HepG2 (cell line): ENCODE measurements at regions of chr9 and their contacts with region 1.

Region 1: DNA sequence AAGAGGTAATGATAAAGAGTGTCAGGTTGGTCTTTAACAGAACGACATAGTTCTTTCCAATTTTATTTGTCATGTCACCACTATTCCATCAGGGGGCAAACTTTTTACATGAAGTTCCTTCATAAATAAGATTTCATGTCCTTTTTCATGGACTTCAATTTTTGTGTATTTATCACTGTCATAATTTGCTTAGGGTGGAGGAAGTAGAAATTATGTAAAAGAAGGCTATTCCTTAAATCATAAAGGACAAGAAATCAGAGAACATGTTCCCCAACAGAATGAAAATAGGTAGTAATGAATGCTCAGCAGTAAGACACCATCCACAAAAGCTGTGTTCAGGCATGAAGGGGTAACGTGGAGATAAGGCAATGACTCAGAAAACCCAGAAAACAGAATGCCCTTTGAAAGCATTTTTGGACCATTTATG is 72.7 kb downstream of the ZFAND5 start:
- DNase-seq: peak; percentile 30
- ATAC-seq: no peak
- H3K4me3 ChIP-seq: no peak overlapping the region
- H3K27ac ChIP-seq: no peak overlapping the region
- H3K4me1 ChIP-seq: peaks cover 12% of the 10 kb centered on the region
- H3K27me3 ChIP-seq: no peaks in the 10 kb centered on the region
- CTCF ChIP-seq: peak; percentile 52
- EP300 ChIP-seq: no peak
- POLR2A ChIP-seq: no peak
- RAD21 ChIP-seq: no peak

Region 2: GRCh38 chr9:72443855-72444254 is 151.6 kb after region 1 on chr9:
- CTCF ChIA-PET with region 1: no interaction called
- POLR2A ChIA-PET with region 1: no interaction called
- in situ Hi-C with region 1: no loop called
- intact Hi-C with region 1: loop called (anchors 5 kb)
- DNase-seq: no peak
- ATAC-seq: no peak
- H3K4me3 ChIP-seq: no peak overlapping the region
- H3K27ac ChIP-seq: no peak overlapping the region
- H3K4me1 ChIP-seq: peaks cover 6% of the 10 kb centered on the region; the same call in 1 of the 2 replicates
- H3K27me3 ChIP-seq: no peaks in the 10 kb centered on the region
- CTCF ChIP-seq: no peak
- EP300 ChIP-seq: no peak
- POLR2A ChIP-seq: no peak
- RAD21 ChIP-seq: no peak

Region 3: GRCh38 chr9:72592502-72593403 is 300.5 kb after region 1 on chr9:
- CTCF ChIA-PET with region 1: interaction called, 20 read pairs
- POLR2A ChIA-PET with region 1: no interaction called
- in situ Hi-C with region 1: no loop called
- intact Hi-C with region 1: loop called (anchors 1 kb)
- DNase-seq: peak; percentile 30
- ATAC-seq: peak; percentile 89
- H3K4me3 ChIP-seq: no peak overlapping the region
- H3K27ac ChIP-seq: no peak overlapping the region
- H3K4me1 ChIP-seq: no peaks in the 10 kb centered on the region
- H3K27me3 ChIP-seq: no peaks in the 10 kb centered on the region; a peak in 1 of 5 replicates
- CTCF ChIP-seq: peak; percentile 78
- EP300 ChIP-seq: no peak
- POLR2A ChIP-seq: no peak
- RAD21 ChIP-seq: peak; percentile 66